Activated CD4-positive, alpha-beta T cell treated with anti-CD3 and anti-CD28 coated beads for 36 hours (primary cell): ENCODE measurements at regions of chr1 and their contacts with region 1.

Region 1: GRCh38 chr1:93814059-93814794 is 64.8 kb downstream of the DNTTIP2 start:
- DNase-seq: peak; percentile 67
- ATAC-seq: peak; percentile 45
- H3K4me3 Mint-ChIP-seq: no peak overlapping the region
- H3K27ac Mint-ChIP-seq: no peak overlapping the region
- H3K4me1 Mint-ChIP-seq: peaks cover 21% of the 10 kb centered on the region
- H3K27me3 Mint-ChIP-seq: no peaks in the 10 kb centered on the region

Region 2: GRCh38 chr1:93629099-93630059 is 184.8 kb before region 1 on chr1:
- CTCF ChIA-PET with region 1: interaction called, 256 read pairs
- POLR2A ChIA-PET with region 1: no interaction called
- intact Hi-C with region 1: loop called (anchors 1 kb)
- DNase-seq: peak; percentile 56
- ATAC-seq: peak; percentile 78
- H3K4me3 Mint-ChIP-seq: no peak overlapping the region
- H3K27ac Mint-ChIP-seq: no peak overlapping the region
- H3K4me1 Mint-ChIP-seq: no peaks in the 10 kb centered on the region
- H3K27me3 Mint-ChIP-seq: no peaks in the 10 kb centered on the region

Region 3: GRCh38 chr1:93692983-93693591 is 121.1 kb before region 1 on chr1:
- CTCF ChIA-PET with region 1: no interaction called
- POLR2A ChIA-PET with region 1: no interaction called
- intact Hi-C with region 1: loop called in 1 of 2 experiments (anchors 1 kb)
- DNase-seq: peak; percentile 76
- ATAC-seq: peak; percentile 95
- H3K4me3 Mint-ChIP-seq: no peak overlapping the region
- H3K27ac Mint-ChIP-seq: peak overlapping the region; percentile 55
- H3K4me1 Mint-ChIP-seq: peaks cover 17% of the 10 kb centered on the region
- H3K27me3 Mint-ChIP-seq: peaks cover 4% of the 10 kb centered on the region

Region 4: DNA sequence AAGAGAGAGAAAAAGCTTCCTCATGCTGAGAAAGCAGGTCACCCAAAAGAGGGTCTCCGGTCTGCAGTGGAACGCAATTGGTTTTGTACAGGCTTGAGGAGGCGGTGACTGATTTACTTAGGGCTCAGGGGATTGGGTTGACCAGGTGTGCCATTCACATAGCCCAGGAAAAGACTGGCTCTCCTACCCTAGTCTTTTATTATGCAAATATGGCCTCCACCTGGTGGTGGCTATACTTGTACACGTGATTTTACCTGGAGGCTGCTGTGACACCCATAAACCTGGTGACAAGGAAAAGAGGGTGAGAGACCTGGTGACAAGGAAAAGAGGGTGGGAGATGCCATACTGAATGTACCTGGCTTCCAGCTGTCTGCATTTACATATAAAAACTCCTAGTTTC is 14.8 kb after region 1 on chr1:
- CTCF ChIA-PET with region 1: interaction called, 10 read pairs
- POLR2A ChIA-PET with region 1: interaction called, 3 read pairs
- intact Hi-C with region 1: no loop called
- DNase-seq: no peak
- ATAC-seq: no peak
- H3K4me3 Mint-ChIP-seq: no peak overlapping the region
- H3K27ac Mint-ChIP-seq: no peak overlapping the region
- H3K4me1 Mint-ChIP-seq: no peaks in the 10 kb centered on the region
- H3K27me3 Mint-ChIP-seq: no peaks in the 10 kb centered on the region

Region 5: DNA sequence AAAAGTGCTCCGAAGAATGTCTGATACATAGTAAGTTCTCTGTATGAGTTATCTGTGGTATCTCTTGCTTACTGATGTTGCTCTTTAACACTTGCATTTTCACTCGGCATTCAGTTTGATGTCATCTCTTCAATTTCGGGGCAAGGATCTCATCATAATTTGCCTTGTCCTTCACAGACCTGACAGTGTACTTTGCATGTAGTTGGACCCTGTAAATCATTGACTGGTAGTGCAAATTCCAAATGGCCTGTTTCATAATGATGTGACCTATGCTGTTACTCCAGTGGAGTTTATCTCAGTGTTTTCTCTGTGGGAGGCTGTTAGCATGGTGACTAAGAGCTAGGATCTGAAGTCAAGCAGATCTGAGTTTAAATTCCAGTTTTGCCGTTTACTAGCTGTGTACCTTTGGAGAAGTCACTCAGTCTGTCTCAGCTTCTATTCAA is 569.8 kb after region 1 on chr1:
- CTCF ChIA-PET with region 1: no interaction called
- POLR2A ChIA-PET with region 1: no interaction called
- intact Hi-C with region 1: loop called in 1 of 2 experiments (anchors 5 kb)
- DNase-seq: peak; percentile 22
- ATAC-seq: peak; percentile 76
- H3K4me3 Mint-ChIP-seq: peak overlapping the region; percentile 61
- H3K27ac Mint-ChIP-seq: peak overlapping the region; percentile 92
- H3K4me1 Mint-ChIP-seq: peaks cover 62% of the 10 kb centered on the region
- H3K27me3 Mint-ChIP-seq: no peaks in the 10 kb centered on the region